ENCODE measurements at regions of chr2 and their contacts with region 1.

Region 1: GRCh38 chr2:187429989-187430388 is 18.1 kb downstream of the CALCRL start:
- DNase-seq: no peak
- H3K4me3 ChIP-seq: no peak overlapping the region
- CTCF ChIP-seq: no peak
- POLR2A ChIP-seq: no peak

Region 2: DNA sequence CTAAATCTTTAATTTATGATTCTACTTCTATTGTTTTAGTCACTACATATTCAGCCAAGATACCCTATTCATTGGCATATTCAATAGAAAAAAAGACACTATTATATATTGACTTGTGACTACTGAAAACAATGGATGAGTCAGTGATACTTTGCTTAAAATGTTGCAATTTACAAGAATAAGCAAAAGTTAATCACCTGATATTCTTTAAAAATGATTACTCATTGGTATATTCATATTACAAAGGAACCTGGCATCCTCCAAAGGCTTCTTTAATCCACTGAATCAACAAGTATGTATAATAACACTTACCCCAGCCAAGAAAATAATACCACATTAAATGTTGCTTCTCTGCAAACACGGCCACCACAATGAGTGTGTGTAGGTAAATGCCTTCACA is 69.7 kb before region 1 on chr2:
- intact Hi-C with region 1: no loop called
- DNase-seq: no peak
- H3K4me3 ChIP-seq: no peak overlapping the region
- CTCF ChIP-seq: no peak
- POLR2A ChIP-seq: no peak

Region 3: DNA sequence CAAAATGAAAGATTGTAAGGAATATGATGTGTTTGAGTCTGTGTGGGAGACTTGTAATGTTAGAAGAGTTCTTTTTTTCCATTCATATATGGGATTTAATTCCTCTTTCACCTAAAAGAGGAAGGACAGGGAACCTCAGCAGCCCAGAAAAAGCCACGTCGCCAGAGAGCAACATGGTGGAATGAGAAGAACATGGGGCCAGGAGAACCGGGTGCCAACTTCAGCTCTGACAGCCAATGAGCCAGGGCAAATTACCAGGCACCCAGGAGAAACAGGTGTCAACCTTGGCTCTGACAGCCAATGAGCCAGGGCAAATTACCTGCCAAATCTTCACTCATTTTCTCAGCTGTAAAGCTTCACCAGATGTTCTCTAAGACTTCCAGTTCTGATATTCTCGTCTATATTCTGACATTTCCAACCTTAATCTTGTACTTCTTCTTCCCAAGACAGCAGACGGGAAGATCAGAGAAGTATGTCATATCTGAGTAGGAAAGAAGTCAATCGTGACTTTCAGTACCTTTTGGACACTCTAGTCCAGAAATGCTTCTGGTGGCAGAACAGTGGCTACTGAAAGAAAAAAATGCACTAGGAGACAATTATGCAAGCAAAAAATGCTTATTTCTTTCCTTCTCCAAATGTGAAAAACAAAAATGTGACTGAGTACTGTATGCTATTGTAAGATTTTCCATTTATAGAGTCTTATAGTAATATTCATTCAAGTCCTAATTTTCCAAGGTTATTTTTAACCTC is 1828.8 kb after region 1 on chr2:
- intact Hi-C with region 1: loop called (anchors 5 kb)
- DNase-seq: no peak
- H3K4me3 ChIP-seq: no peak overlapping the region
- CTCF ChIP-seq: no peak
- POLR2A ChIP-seq: no peak